ENCODE measurements at regions of chr12 and their contacts with region 1.

Region 1: GRCh38 chr12:56987551-56988053 is 18.7 kb downstream of the ZBTB39 start:
- DNase-seq: peak; percentile 84
- H3K4me3 Mint-ChIP-seq: no peak overlapping the region
- H3K27ac Mint-ChIP-seq: no peak overlapping the region
- H3K4me1 Mint-ChIP-seq: peaks cover 12% of the 10 kb centered on the region
- H3K27me3 Mint-ChIP-seq: no peaks in the 10 kb centered on the region

Region 2: DNA sequence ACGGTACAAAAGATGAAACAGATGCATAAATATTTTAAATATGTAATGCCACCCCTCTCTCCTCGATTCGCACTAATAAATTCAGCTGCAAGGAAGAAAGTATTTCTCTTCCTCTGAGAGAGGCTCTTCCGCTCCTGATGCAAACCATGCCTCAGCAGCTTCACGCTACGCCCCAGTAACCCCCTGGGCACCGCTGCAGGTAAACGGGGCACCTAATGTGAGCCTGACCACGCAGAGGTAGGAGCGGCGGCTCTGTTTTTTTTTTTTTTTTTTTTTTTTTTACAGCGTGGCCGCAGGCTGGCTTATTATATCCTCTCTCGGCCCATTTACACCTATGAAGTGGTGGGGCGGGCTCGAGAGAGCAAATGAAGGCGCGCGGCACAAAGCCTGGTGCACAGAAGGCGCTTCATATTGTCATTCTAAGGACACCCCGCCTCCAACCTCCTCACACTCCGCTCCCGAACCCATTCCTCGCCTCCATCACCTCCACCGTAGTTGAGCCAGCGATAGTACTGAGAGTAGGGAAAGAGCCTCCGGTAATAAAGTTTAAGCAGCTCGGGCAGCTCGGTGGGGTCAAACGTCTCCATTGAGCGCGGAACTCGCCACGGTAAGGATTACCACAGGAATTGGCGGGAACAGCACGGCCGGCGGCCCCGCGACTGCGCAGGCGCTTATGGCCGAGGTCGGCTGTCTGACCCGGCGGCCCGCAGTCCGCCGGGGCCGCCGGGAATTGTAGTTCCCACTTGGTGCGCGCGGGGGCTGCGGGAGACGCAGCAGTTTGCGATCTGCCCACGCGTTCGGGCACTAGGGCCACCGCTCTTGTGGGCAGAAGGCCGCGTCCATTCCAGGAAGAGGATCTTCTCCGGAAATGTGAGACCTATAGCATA is 235.6 kb before region 1 on chr12 and contains the start of gene PRIM1:
- CTCF ChIA-PET with region 1: interaction called, 52 read pairs
- intact Hi-C with region 1: loop called (anchors 1 kb)
- DNase-seq: peak; percentile 90
- H3K4me3 Mint-ChIP-seq: peak within 1 kb of the TSS; percentile 98
- H3K27ac Mint-ChIP-seq: peak within 1 kb of the TSS; percentile 99
- H3K4me1 Mint-ChIP-seq: peaks cover 40% of the 10 kb centered on the region
- H3K27me3 Mint-ChIP-seq: no peaks in the 10 kb centered on the region
- total RNA-seq, gene PRIM1: 74.9 to 75.0 TPM

Region 3: GRCh38 chr12:56763753-56764657 is 223.6 kb before region 1 on chr12:
- CTCF ChIA-PET with region 1: interaction called, 52 read pairs
- intact Hi-C with region 1: loop called (anchors 1 kb)
- DNase-seq: no peak
- H3K4me3 Mint-ChIP-seq: no peak overlapping the region
- H3K27ac Mint-ChIP-seq: no peak overlapping the region
- H3K4me1 Mint-ChIP-seq: no peaks in the 10 kb centered on the region
- H3K27me3 Mint-ChIP-seq: no peaks in the 10 kb centered on the region

Region 4: DNA sequence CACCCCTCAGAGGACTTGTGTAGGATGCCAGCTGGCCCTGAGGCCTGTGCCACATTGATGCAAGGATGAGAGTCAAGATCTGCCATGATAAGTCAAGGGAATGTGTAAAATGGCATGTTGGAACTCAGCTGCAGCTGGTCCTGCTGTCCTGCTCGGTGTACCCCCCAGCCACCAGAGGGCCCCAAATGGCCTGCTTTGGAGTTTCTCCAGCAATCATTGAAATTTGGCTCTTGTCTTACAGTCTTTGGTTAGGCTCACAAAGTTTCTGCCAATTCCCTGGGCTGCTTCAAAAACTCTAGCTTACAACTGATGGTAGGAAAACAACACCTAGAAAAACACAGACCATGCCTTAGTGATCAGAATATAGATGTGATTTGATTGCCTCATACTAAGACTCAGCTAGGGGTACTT is 147.7 kb before region 1 on chr12:
- CTCF ChIA-PET with region 1: interaction called, 19 read pairs
- intact Hi-C with region 1: loop called (anchors 1 kb)
- DNase-seq: peak; percentile 70
- H3K4me3 Mint-ChIP-seq: no peak overlapping the region
- H3K27ac Mint-ChIP-seq: no peak overlapping the region
- H3K4me1 Mint-ChIP-seq: peaks cover 17% of the 10 kb centered on the region
- H3K27me3 Mint-ChIP-seq: no peaks in the 10 kb centered on the region